ENCODE measurements at regions of chr17 and their contacts with region 1.

Region 1: DNA sequence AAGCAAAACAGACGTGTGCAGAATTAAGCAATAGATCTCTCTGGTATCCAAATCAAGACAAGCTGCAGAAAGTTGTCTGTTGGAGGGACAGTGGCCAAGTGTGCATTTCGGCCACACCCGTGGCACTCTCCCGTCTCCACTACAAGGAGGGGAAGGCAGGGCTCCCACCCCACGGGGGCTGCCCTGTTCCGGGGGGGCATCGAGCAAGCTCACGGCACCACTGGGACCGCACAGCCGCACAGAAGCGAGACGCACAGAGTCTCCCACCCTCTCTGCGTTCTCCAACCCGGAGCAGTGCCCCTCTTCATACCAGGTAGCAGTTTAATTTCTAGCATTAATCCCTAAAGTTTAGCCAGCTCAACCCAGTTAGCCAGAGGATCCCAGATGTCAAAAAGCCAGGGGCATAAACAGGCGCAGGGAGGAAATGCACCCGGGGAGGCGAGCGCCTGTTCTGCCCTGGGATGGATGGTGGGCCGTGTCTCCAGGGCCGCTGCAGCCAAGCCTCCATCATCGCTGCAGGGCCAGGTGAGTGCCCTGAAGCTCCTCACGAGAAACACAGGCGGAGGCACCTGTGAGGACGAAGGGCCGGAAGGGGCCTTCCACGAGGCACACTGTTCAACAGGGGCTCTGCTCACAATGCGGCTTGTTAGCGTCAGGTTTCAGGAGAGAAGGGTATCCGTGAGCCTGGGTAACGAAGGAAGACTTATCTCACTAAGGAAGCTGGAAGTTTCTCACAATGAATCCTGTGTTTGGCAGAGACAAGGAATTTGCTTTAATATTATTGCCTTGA is 42.1 kb upstream of the METRNL start:
- DNase-seq: no peak
- ATAC-seq: no peak
- H3K4me3 ChIP-seq: no peak overlapping the region
- H3K27ac ChIP-seq: no peak overlapping the region
- H3K4me1 ChIP-seq: no peaks in the 10 kb centered on the region
- H3K27me3 ChIP-seq: no peaks in the 10 kb centered on the region
- CTCF ChIP-seq: no peak

Region 2: GRCh38 chr17:82657926-82658325 is 379.4 kb before region 1 on chr17:
- CTCF ChIA-PET with region 1: no interaction called
- POLR2A ChIA-PET with region 1: interaction called, 10 read pairs
- in situ Hi-C with region 1: no loop called
- intact Hi-C with region 1: no loop called
- DNase-seq: no peak
- ATAC-seq: no peak
- H3K4me3 ChIP-seq: no peak overlapping the region
- H3K27ac ChIP-seq: no peak overlapping the region
- H3K4me1 ChIP-seq: peaks cover 7% of the 10 kb centered on the region
- H3K27me3 ChIP-seq: no peaks in the 10 kb centered on the region
- CTCF ChIP-seq: no peak

Region 3: DNA sequence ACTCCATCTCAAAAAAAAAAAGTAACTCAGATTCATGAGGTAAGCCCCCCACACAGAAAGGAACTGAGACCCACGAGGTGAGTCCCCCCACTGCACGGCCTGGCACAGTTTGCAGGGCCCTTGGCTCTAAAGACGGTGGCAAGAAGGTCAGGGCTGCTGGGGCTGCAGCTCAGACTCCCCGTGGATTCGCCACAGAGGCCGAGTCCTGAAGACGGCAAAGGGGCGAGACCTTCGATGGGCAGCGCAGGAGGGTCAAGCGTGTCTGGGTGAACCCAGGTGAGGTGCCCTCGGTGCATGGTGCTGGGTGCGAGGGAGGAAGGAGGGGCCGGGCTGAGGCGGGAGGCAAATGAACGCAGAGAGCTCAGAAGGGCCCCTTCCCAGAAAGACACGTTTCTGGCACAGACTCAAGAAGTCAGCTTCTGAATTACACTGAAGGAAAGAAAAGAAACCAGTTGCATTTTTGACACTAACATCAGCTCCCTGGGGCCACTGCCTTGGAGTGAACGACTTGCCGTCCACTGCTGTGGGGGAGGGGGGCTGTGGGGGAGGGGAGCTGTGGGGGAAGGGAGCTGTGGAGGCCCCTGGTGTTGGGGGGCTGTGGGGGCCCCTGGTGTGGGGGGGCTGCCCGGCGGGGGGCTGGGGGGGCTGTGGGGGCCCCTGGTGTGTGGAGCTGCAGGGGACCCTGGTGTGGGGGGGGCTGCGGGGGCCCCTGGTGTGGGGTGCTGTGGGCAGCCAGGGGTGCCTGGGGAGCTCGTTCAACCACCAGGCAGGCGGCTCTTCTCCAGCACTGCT is 27.7 kb before region 1 on chr17:
- CTCF ChIA-PET with region 1: no interaction called
- POLR2A ChIA-PET with region 1: interaction called, 10 read pairs
- in situ Hi-C with region 1: no loop called
- intact Hi-C with region 1: no loop called
- DNase-seq: no peak
- ATAC-seq: no peak
- H3K4me3 ChIP-seq: no peak overlapping the region
- H3K27ac ChIP-seq: no peak overlapping the region
- H3K4me1 ChIP-seq: peaks cover 6% of the 10 kb centered on the region
- H3K27me3 ChIP-seq: no peaks in the 10 kb centered on the region
- CTCF ChIP-seq: no peak

Measured in Panc1 (cell line).